ENCODE measurements at regions of chr15 and their contacts with region 1.

Region 1: DNA sequence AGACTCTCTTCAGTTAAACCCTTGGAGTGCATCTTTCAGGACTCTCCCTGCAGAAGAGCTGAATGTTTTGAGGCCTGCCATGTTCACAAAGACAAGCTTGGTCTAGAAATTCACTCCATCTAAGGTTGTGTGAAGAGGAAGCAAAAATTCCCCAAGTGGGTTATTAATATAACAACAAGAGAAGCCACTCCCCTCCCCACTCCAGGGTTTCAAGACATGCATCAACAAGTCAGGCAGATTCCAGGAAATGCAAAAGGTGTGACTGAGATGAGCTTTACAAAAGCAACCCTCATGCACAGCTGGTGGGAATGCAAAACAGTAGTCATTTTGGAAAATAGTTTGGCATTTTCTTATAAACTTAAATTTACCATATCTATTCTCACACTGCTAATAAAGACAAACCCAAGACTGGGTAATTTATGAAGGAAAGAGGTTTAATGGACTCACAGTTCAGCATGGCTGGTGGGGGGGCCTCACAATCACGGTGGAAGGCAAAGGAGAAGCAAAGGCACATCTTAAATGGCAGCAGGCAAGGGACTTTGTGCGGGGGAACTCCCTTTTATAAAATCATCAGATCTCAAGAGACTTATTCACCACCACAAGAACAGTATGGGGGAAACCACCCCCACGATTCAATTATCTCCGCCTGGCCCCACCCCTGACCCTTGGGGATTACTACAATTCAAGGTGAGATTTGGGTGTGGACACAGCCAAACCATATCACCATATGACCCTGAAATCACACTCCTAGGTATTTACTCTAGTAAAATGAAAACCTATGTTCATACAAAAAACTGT is 31.3 kb downstream of the TARS3 start:
- DNase-seq: no peak
- H3K4me3 Mint-ChIP-seq: peak overlapping the region; percentile 43
- H3K27ac Mint-ChIP-seq: peak overlapping the region; percentile 88
- H3K4me1 Mint-ChIP-seq: peaks cover 74% of the 10 kb centered on the region
- H3K27me3 Mint-ChIP-seq: no peaks in the 10 kb centered on the region

Region 2: DNA sequence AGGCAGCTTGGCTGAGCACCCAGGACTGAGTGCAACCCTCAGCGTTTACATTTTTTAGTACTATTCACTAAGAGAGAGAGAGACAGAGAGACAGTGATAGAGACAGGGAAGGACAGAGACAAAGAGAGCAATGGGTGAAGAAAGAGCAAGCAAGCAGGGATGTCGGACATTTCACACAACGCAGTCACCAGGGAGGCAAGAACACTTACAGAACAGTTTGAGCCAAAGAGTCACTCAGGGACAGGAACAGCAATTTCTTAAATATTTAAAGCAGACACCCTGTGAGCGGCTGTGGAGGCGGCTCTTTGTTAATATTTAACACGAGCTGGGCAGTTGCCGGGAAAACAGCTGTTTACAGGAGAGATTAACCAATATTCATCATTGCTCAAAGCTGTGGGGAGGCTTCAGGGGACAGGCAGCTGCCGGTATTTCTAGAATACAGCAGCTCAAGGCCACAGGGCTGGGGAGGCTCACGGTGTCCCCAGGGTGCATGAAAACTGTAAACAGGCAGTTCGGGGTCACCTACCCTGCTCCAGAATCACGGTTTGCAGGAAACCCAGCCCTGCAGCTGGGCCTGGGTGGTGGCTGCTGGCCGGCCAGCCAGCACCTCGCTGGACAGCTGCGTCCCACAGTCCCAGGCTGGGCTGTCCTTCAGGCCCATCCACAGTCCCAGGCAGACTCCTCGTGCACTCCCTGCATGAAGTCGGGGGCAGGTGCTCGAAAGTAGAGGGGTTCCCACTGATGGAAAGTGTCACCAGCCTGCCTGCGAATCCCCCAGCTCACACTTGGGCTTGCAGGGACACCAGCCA is 164.7 kb before region 1 on chr15:
- intact Hi-C with region 1: no loop called
- DNase-seq: no peak
- H3K4me3 Mint-ChIP-seq: no peak overlapping the region
- H3K27ac Mint-ChIP-seq: no peak overlapping the region
- H3K4me1 Mint-ChIP-seq: no peaks in the 10 kb centered on the region
- H3K27me3 Mint-ChIP-seq: no peaks in the 10 kb centered on the region

Region 3: DNA sequence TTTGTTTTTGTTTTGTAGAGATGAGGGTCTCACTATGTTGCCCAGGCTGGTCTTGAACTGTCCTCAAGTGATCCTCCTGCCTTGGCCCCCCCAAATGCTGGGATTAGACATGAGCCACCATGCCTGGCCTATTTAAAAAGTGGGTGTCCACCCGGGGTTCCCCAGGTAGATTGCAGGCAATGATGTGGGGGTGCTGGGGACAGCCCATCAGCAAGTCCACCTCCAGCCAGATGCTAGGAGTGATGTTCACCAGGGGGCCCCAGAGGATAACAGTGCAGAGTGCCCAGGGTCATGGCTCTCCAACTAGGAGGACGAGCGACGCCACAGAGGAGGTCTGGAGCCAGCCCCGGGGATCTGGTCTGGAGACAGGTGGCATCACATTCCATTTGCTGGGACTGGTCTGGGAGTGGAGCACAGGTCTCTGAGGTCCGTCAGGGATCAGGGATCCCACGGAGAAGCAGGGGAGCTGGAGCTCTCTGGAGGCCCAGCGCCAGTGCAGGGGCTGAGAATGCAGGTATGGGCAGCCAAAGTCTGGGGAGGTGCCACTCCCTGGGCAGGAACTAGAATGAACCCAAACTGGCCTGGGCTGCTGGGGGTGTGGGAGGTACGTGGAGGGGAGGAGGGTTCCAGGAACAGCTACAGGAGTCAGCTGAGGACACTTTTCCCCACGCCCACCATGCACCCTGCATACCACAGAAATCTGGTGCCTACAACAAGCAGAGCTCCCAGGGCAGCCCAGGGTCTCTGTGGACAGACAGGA is 152.3 kb before region 1 on chr15:
- intact Hi-C with region 1: no loop called
- DNase-seq: no peak
- H3K4me3 Mint-ChIP-seq: no peak overlapping the region
- H3K27ac Mint-ChIP-seq: no peak overlapping the region
- H3K4me1 Mint-ChIP-seq: no peaks in the 10 kb centered on the region
- H3K27me3 Mint-ChIP-seq: no peaks in the 10 kb centered on the region

Region 4: GRCh38 chr15:101652098-101652782 is 40.8 kb before region 1 on chr15 and contains the start of gene TM2D3:
- intact Hi-C with region 1: loop called (anchors 2 kb)
- DNase-seq: peak; percentile 94
- H3K4me3 Mint-ChIP-seq: peak within 1 kb of the TSS; percentile 93
- H3K27ac Mint-ChIP-seq: peak within 1 kb of the TSS; percentile 93
- H3K4me1 Mint-ChIP-seq: peaks cover 36% of the 10 kb centered on the region
- H3K27me3 Mint-ChIP-seq: no peaks in the 10 kb centered on the region
- total RNA-seq, gene TM2D3: 57.1 and 62.4 TPM in 2 replicates

Region 5: GRCh38 chr15:101723874-101724674 is 31.1 kb after region 1 on chr15 and contains the start of gene TARS3:
- intact Hi-C with region 1: loop called (anchors 1 kb)
- DNase-seq: peak; percentile 83
- H3K4me3 Mint-ChIP-seq: peak within 1 kb of the TSS; percentile 88
- H3K27ac Mint-ChIP-seq: peak within 1 kb of the TSS; percentile 95
- H3K4me1 Mint-ChIP-seq: peaks cover 30% of the 10 kb centered on the region
- H3K27me3 Mint-ChIP-seq: peaks cover under 1% of the 10 kb centered on the region
- total RNA-seq, gene TARS3: 13.9 and 15.2 TPM in 2 replicates

Measured in activated T-helper 1 cell treated with anti-CD3 and anti-CD28 coated beads, Interleukin-12 subunit alpha, Interleukin-12 subunit beta, Interleukin-2, Interleukin-4 antibody, amounts not matched to agents 30 ng/mL and 10 ng/mL and 1 ng/mL, durations not matched to agents 14 hours and 24 hours and 36 hours (primary cell).